ENCODE measurements at regions of chr2 and their contacts with region 1.

Region 1: GRCh38 chr2:96760036-96760985 is at the start of gene CNNM4:
- DNase-seq: peak; percentile 96
- ATAC-seq: peak; percentile 93
- H3K4me3 Mint-ChIP-seq: peak within 1 kb of the TSS; percentile 75
- H3K27ac Mint-ChIP-seq: peak within 1 kb of the TSS; percentile 82
- H3K4me1 Mint-ChIP-seq: peaks cover 43% of the 10 kb centered on the region
- H3K27me3 Mint-ChIP-seq: no peaks in the 10 kb centered on the region
- total RNA-seq, gene CNNM4: 7.1 to 11.3 TPM

Region 2: GRCh38 chr2:96638144-96639121 is 121.9 kb before region 1 on chr2 and contains the start of gene KANSL3:
- CTCF ChIA-PET with region 1: interaction called, 13 read pairs
- POLR2A ChIA-PET with region 1: interaction called, 12 read pairs
- intact Hi-C with region 1: loop called (anchors 1 kb)
- DNase-seq: peak; percentile 94
- ATAC-seq: peak; percentile 86
- H3K4me3 Mint-ChIP-seq: peak within 1 kb of the TSS; percentile 91
- H3K27ac Mint-ChIP-seq: peak within 1 kb of the TSS; percentile 93
- H3K4me1 Mint-ChIP-seq: peaks cover 30% of the 10 kb centered on the region
- H3K27me3 Mint-ChIP-seq: no peaks in the 10 kb centered on the region
- total RNA-seq, gene KANSL3: 33.9 to 39.1 TPM

Region 3: DNA sequence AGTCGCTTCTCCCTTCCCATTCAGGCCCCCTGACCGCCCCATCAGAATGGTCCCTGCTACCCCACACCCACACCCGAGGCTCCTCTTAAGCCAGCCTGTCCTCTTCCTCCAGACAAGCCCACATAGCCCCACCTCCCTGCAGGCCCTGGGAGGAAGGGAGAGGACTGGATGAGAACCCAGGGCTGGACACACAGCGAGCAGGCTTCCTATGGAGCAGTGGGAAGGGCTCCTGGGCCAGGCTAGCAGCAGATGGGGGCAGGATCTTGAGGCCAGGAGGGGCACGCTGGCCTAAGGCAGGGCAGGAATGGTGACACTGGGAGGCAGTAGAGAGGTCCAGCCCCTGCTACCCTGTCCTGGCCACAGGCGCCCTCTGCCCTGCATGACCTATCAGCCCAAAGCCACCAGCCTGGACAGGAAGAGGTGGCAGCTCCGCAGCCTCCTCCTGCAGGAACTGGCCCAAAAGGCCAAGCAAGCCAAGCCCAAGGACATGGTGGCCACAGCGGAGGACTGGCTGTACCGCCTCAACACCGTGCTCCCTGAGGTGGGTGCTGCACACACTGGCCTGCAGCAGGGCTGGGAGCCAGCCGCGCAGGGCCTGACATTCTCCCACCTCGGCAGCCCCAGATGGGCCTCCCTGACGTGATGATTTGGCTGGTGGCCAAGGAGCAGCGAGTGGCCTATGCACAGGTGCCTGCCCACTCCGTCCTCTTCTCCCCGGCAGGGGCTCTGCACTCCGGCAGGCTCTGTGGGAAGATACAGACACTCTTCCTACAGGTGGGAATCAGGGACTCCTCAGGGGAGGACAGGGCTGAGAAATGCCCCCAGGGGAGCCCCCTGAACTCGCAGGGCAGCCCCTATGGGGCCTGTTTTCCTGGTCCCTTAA is 74.5 kb before region 1 on chr2:
- CTCF ChIA-PET with region 1: no interaction called
- POLR2A ChIA-PET with region 1: no interaction called
- intact Hi-C with region 1: no loop called
- DNase-seq: no peak
- ATAC-seq: no peak
- H3K4me3 Mint-ChIP-seq: no peak overlapping the region
- H3K27ac Mint-ChIP-seq: no peak overlapping the region
- H3K4me1 Mint-ChIP-seq: no peaks in the 10 kb centered on the region
- H3K27me3 Mint-ChIP-seq: peaks cover 4% of the 10 kb centered on the region

Region 4: GRCh38 chr2:96773922-96774321 is 13.6 kb after region 1 on chr2:
- CTCF ChIA-PET with region 1: interaction called, 27 read pairs
- POLR2A ChIA-PET with region 1: interaction called, 6 read pairs
- intact Hi-C with region 1: no loop called
- DNase-seq: peak; percentile 67
- ATAC-seq: peak; percentile 67
- H3K4me3 Mint-ChIP-seq: peak overlapping the region; percentile 59
- H3K27ac Mint-ChIP-seq: peak overlapping the region; percentile 70
- H3K4me1 Mint-ChIP-seq: peaks cover 22% of the 10 kb centered on the region
- H3K27me3 Mint-ChIP-seq: no peaks in the 10 kb centered on the region

Region 5: DNA sequence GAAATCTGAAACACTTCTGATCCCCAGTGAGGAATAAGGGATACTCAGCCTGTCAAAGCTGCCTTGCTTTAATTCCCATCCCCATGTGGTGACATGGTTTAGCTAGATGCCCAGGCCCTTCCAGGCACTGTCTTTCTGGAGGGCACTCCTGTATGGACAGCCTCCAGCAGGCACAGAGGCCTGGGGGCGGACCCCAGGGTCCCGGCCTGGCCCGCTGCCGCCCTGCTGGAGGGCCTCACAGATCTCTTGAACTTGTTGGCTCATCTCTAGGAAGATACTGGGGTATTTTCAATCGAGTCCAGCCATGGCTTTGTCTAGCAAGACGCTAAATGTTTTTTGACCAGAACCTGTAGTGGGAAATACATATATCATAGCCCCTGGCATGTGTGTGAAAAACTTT is 34.8 kb after region 1 on chr2:
- CTCF ChIA-PET with region 1: interaction called, 7 read pairs
- POLR2A ChIA-PET with region 1: no interaction called
- intact Hi-C with region 1: loop called (anchors 2 to 5 kb)
- DNase-seq: no peak
- ATAC-seq: no peak
- H3K4me3 Mint-ChIP-seq: no peak overlapping the region
- H3K27ac Mint-ChIP-seq: no peak overlapping the region
- H3K4me1 Mint-ChIP-seq: no peaks in the 10 kb centered on the region
- H3K27me3 Mint-ChIP-seq: no peaks in the 10 kb centered on the region

Measured in activated CD4-positive, alpha-beta T cell treated with anti-CD3 and anti-CD28 coated beads for 36 hours (primary cell).